Pancreas (tissue), 10 donors: ENCODE measurements at regions of chr10 and their contacts with region 1.

Region 1: DNA sequence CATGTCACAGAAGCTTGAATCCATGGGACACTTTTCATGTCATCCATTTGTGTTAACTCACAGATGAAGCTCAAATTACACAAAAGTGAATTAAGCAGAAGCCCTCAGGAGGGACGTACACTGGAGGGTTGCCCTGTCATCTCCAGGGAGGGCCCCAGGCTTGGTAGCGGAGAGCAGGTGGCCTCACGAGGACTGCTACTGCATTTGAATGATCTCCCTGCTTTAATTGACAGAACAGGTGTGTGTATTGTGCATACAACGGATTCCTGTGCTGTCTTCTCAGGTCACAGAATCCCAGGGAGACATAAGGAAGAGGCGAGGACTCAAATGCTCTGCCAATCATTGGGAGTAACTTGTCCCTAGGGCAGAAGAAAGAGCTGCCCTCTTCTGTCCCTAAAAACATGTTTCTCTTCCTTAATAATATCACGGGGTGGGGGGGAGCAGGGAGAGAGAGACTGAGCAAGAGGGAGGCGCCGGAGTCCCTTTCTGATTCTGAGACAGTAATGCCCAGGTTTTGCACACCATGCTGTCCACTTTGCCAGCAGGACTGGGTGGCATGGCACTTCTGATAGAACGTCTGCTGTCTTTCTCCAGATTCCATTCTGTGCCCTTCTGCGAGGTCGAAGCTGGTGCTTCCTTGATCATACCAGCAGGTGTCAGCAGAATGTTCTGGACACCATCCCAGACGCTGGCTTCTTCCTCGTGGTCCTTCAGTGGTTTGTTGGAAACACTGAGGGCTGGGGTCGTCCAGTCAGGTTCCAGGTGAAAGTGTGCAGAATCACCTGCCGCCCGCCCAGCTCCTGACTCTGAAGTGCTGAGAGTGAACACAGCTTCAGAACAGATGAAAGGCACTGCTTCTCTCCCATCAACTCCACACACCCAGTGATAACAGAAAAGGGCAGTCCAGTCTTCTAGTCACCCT is 26.2 kb upstream of the RASGEF1A start:
- DNase-seq: peak; percentile 34 to 65 (median 58)
- ATAC-seq: peak; percentile 87 to 98 (median 96)
- H3K4me3 ChIP-seq: no peak overlapping the region
- H3K27ac ChIP-seq: no peak overlapping the region
- H3K4me1 ChIP-seq: no peaks in the 10 kb centered on the region
- H3K27me3 ChIP-seq: no peaks in the 10 kb centered on the region
- CTCF ChIP-seq: peak; percentile 49 to 66 (median 62)

Region 2: GRCh38 chr10:43461950-43462349 is 168.9 kb after region 1 on chr10:
- intact Hi-C with region 1: loop called in 2 of 3 experiments (anchors 10 kb)
- DNase-seq: no peak
- ATAC-seq: peak; percentile 78 to 93 (median 92)
- H3K4me3 ChIP-seq: peak overlapping the region in 1 of 4 donors; percentile 15
- H3K27ac ChIP-seq: no peak overlapping the region
- H3K4me1 ChIP-seq: no peaks in the 10 kb centered on the region
- H3K27me3 ChIP-seq: no peaks in the 10 kb centered on the region
- CTCF ChIP-seq: peak; percentile 28 to 76 (median 68)